ENCODE measurements at regions of chr1 and their contacts with region 1.

Region 1: GRCh38 chr1:35350872-35351271 is 82.4 kb downstream of the ZMYM4 start:
- DNase-seq: no peak
- H3K4me3 ChIP-seq: no peak overlapping the region
- H3K4me3 Mint-ChIP-seq: no peak overlapping the region
- H3K27ac ChIP-seq: no peak overlapping the region
- H3K27ac Mint-ChIP-seq: peak overlapping the region in 1 of 8 donors; percentile 93
- H3K4me1 ChIP-seq: no peaks in the 10 kb centered on the region
- H3K4me1 Mint-ChIP-seq: peaks cover 2 to 8% (median 5%) of the 10 kb centered on the region in 3 donors
- H3K27me3 ChIP-seq: no peaks in the 10 kb centered on the region
- H3K27me3 Mint-ChIP-seq: no peaks in the 10 kb centered on the region

Region 2: GRCh38 chr1:34831721-34832246 is 519.1 kb before region 1 on chr1:
- CTCF ChIA-PET with region 1: no interaction called
- POLR2A ChIA-PET with region 1: interaction called, 19 read pairs
- DNase-seq: no peak
- H3K4me3 ChIP-seq: no peak overlapping the region
- H3K4me3 Mint-ChIP-seq: no peak overlapping the region
- H3K27ac ChIP-seq: no peak overlapping the region
- H3K27ac Mint-ChIP-seq: peak overlapping the region in 1 of 8 donors; percentile 52
- H3K4me1 ChIP-seq: no peaks in the 10 kb centered on the region
- H3K4me1 Mint-ChIP-seq: peaks cover 0 to 2% (median 0%) of the 10 kb centered on the region in 3 donors
- H3K27me3 ChIP-seq: no peaks in the 10 kb centered on the region
- H3K27me3 Mint-ChIP-seq: peaks cover 0 to under 1% of the 10 kb centered on the region in 2 donors

Region 3: GRCh38 chr1:35316264-35316663 is 34.6 kb before region 1 on chr1:
- CTCF ChIA-PET with region 1: no interaction called
- POLR2A ChIA-PET with region 1: no interaction called
- DNase-seq: no peak
- H3K4me3 ChIP-seq: no peak overlapping the region
- H3K4me3 Mint-ChIP-seq: no peak overlapping the region
- H3K27ac ChIP-seq: no peak overlapping the region
- H3K27ac Mint-ChIP-seq: no peak overlapping the region
- H3K4me1 ChIP-seq: no peaks in the 10 kb centered on the region
- H3K4me1 Mint-ChIP-seq: peaks cover 4 to 11% (median 6%) of the 10 kb centered on the region in 3 donors
- H3K27me3 ChIP-seq: no peaks in the 10 kb centered on the region
- H3K27me3 Mint-ChIP-seq: no peaks in the 10 kb centered on the region

Region 4: GRCh38 chr1:35390600-35391494 is 40.0 kb after region 1 on chr1:
- CTCF ChIA-PET with region 1: no interaction called
- POLR2A ChIA-PET with region 1: no interaction called
- DNase-seq: no peak
- H3K4me3 ChIP-seq: no peak overlapping the region
- H3K4me3 Mint-ChIP-seq: no peak overlapping the region
- H3K27ac ChIP-seq: no peak overlapping the region
- H3K27ac Mint-ChIP-seq: no peak overlapping the region
- H3K4me1 ChIP-seq: no peaks in the 10 kb centered on the region
- H3K4me1 Mint-ChIP-seq: no peaks in the 10 kb centered on the region
- H3K27me3 ChIP-seq: no peaks in the 10 kb centered on the region
- H3K27me3 Mint-ChIP-seq: no peaks in the 10 kb centered on the region

Region 5: GRCh38 chr1:35641233-35641866 is 290.5 kb after region 1 on chr1 and contains the start of gene PSMB2:
- CTCF ChIA-PET with region 1: no interaction called
- POLR2A ChIA-PET with region 1: no interaction called
- DNase-seq: peak; percentile 92 to 96 (median 94)
- H3K4me3 ChIP-seq: peak within 1 kb of the TSS; percentile 99
- H3K4me3 Mint-ChIP-seq: peak within 1 kb of the TSS; percentile 99 to 100 (median 100)
- H3K27ac ChIP-seq: peak within 1 kb of the TSS; percentile 92
- H3K27ac Mint-ChIP-seq: peak within 1 kb of the TSS; percentile 97 to 100 (median 100)
- H3K4me1 ChIP-seq: peaks cover 33% of the 10 kb centered on the region
- H3K4me1 Mint-ChIP-seq: peaks cover 39 to 50% (median 50%) of the 10 kb centered on the region in 3 donors
- H3K27me3 ChIP-seq: peaks cover 11% of the 10 kb centered on the region
- H3K27me3 Mint-ChIP-seq: peaks cover 15 to 31% of the 10 kb centered on the region in 2 donors
- total RNA-seq, gene PSMB2: 117 to 119 TPM

Measured in CD8-positive, alpha-beta memory T cell (primary cell).